PC-3 (cell line): ENCODE measurements at regions of chr10 and their contacts with region 1.

Region 1: DNA sequence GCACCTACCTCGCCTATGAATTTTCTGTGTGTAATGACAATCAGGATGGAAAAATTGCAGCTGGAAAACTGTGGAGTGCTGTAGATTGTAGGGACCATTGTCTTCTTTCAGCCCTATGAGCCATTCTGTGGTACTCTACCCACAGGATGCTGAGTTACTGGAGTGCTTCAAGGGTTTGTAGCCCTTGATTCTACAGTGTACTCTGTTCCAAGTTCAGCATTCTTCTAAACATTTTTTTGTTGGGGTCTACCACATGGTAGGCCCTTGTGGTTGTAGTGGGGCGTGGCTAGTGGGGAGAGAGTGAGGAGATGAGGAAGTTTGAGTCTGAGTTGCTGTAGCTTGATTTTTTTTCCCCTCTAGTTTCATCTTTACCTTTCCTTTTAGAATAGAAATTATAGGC is 33.5 kb downstream of the REEP3 start:
- DNase-seq: peak; percentile 89
- ATAC-seq: peak; percentile 45
- H3K4me3 ChIP-seq: peak overlapping the region; percentile 53
- H3K27ac ChIP-seq: peak overlapping the region; percentile 92
- H3K4me1 ChIP-seq: peaks cover 48% of the 10 kb centered on the region
- H3K27me3 ChIP-seq: no peaks in the 10 kb centered on the region
- CTCF ChIP-seq: no peak

Region 2: GRCh38 chr10:63166742-63167258 is 387.9 kb before region 1 on chr10:
- CTCF ChIA-PET with region 1: no interaction called
- POLR2A ChIA-PET with region 1: no interaction called
- intact Hi-C with region 1: no loop called
- DNase-seq: peak; percentile 99
- ATAC-seq: peak; percentile 70
- H3K4me3 ChIP-seq: no peak overlapping the region
- H3K27ac ChIP-seq: no peak overlapping the region
- H3K4me1 ChIP-seq: no peaks in the 10 kb centered on the region
- H3K27me3 ChIP-seq: no peaks in the 10 kb centered on the region
- CTCF ChIP-seq: peak; percentile 100

Region 3: GRCh38 chr10:63416376-63416775 is 138.3 kb before region 1 on chr10:
- CTCF ChIA-PET with region 1: no interaction called
- POLR2A ChIA-PET with region 1: no interaction called
- intact Hi-C with region 1: loop called (anchors 1 kb)
- DNase-seq: no peak
- ATAC-seq: no peak
- H3K4me3 ChIP-seq: no peak overlapping the region
- H3K27ac ChIP-seq: no peak overlapping the region
- H3K4me1 ChIP-seq: peaks cover 43% of the 10 kb centered on the region
- H3K27me3 ChIP-seq: no peaks in the 10 kb centered on the region
- CTCF ChIP-seq: no peak

Region 4: GRCh38 chr10:63431962-63432797 is 122.5 kb before region 1 on chr10:
- CTCF ChIA-PET with region 1: no interaction called
- POLR2A ChIA-PET with region 1: interaction called, 12 read pairs
- intact Hi-C with region 1: no loop called
- DNase-seq: peak; percentile 98
- ATAC-seq: peak; percentile 55
- H3K4me3 ChIP-seq: no peak overlapping the region
- H3K27ac ChIP-seq: peak overlapping the region; percentile 71
- H3K4me1 ChIP-seq: peaks cover 65% of the 10 kb centered on the region
- H3K27me3 ChIP-seq: no peaks in the 10 kb centered on the region
- CTCF ChIP-seq: no peak

Region 5: GRCh38 chr10:63521416-63522276 is 33.0 kb before region 1 on chr10:
- CTCF ChIA-PET with region 1: no interaction called
- POLR2A ChIA-PET with region 1: interaction called, 43 read pairs
- intact Hi-C with region 1: loop called (anchors 1 kb)
- DNase-seq: peak; percentile 94
- ATAC-seq: peak; percentile 58
- H3K4me3 ChIP-seq: peak overlapping the region; percentile 75
- H3K27ac ChIP-seq: peak overlapping the region; percentile 85
- H3K4me1 ChIP-seq: peaks cover 65% of the 10 kb centered on the region
- H3K27me3 ChIP-seq: no peaks in the 10 kb centered on the region
- CTCF ChIP-seq: no peak

Region 6: DNA sequence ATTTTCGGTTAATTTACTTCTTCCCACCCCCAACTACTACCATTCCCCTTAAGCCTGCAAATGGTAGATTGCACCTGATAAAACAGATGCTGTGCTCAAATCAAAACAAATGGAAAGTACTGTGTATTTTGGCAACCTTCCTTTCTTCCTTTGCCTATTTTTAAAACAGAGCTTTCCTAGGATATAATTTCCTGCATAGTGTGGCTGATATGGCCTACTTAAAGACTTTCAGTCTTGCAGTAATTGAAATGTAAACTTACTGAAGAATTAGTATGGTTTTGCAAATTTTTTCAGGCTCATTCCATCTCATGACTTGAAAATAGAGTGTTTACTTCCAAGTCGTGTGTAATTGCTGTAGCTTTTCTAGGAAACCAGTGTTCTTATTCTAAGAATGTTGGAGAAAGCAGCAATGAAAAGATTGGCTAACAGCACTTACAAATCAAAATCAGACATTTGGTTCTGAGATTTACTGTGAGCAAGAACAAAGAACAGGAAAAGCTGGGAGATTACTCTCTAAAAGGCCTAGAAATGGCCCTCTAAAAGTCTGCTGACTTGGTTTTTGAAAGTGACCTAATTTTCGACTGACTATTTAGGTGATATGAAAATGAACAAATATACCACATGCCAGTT is 18.5 kb after region 1 on chr10:
- CTCF ChIA-PET with region 1: no interaction called
- POLR2A ChIA-PET with region 1: interaction called, 4 read pairs
- intact Hi-C with region 1: loop called (anchors 2 kb)
- DNase-seq: no peak
- ATAC-seq: peak; percentile 52
- H3K4me3 ChIP-seq: no peak overlapping the region
- H3K27ac ChIP-seq: no peak overlapping the region
- H3K4me1 ChIP-seq: no peaks in the 10 kb centered on the region
- H3K27me3 ChIP-seq: no peaks in the 10 kb centered on the region
- CTCF ChIP-seq: no peak

Region 7: DNA sequence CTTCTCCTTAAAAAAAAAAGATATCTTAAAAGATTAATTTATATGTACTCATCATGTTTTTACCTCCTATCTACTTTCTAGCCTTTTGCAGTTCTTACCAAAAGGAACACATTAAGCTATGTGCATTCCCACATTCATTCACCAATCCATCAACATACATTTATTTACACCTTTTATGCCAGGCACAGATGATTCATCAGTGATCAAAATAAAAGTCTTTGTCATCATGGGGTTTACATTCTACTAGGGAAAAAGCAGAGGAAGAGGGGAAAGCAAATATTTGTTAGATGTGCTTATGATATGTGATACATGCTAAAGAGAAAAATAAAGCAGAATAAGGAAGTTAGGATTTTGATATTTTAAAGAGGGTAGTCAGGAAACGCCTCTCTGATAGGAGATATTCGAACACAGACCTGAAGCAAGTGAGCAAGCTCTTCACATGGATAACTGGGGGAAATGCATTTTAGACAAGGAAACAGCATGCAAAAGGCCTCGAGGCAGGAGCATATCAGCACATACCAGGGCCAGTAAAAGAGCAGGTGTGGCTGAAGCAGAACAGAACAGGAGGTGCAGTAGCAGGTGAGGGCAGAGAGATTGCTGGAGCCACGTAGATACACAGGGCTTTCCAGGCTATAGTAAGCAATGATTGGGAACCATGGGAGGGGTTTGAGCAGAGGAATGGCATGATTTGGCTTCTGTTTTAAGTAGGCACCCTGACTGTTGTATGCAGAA is 33.9 kb after region 1 on chr10:
- CTCF ChIA-PET with region 1: no interaction called
- POLR2A ChIA-PET with region 1: no interaction called
- intact Hi-C with region 1: loop called (anchors 1 kb)
- DNase-seq: peak; percentile 93
- ATAC-seq: peak; percentile 79
- H3K4me3 ChIP-seq: peak overlapping the region; percentile 2; the same call in 1 of the 2 replicates
- H3K27ac ChIP-seq: peak overlapping the region; percentile 44
- H3K4me1 ChIP-seq: peaks cover 31% of the 10 kb centered on the region
- H3K27me3 ChIP-seq: no peaks in the 10 kb centered on the region
- CTCF ChIP-seq: no peak

Region 8: DNA sequence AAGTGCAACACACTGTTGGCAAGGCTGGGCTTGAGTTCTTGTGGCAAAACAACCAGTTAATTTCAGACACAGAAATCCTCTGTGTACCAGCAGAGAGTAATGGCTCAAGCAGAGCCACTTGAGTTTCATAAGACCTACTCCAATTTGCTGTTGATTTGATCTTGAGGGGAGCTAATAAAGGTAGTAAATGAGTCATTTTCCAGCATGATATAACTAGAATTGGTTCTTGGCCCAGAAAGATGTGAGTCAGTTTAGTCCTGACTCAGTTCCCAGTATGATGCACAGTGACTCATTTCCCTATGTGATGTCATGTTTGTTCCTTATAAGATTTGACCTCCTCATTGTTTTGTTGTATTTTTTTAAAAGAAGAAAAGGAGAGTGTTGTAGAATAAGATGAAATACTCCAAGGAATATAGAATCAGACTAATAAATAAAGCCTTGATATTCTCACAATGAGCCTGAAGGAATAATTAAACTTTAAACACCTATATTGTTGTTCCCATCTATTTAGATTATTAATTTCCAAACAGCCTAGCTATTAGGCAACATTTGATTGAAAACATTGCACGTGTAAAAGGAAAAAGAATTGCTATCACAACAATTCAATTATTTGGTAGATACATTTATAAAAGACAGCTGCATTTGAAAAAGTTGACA is 152.7 kb after region 1 on chr10:
- CTCF ChIA-PET with region 1: interaction called, 4 read pairs
- POLR2A ChIA-PET with region 1: interaction called, 5 read pairs
- intact Hi-C with region 1: loop called (anchors 1 kb)
- DNase-seq: peak; percentile 100
- ATAC-seq: peak; percentile 70
- H3K4me3 ChIP-seq: no peak overlapping the region
- H3K27ac ChIP-seq: peak overlapping the region; percentile 76
- H3K4me1 ChIP-seq: peaks cover 62% of the 10 kb centered on the region
- H3K27me3 ChIP-seq: no peaks in the 10 kb centered on the region
- CTCF ChIP-seq: no peak